Activated CD8-positive, alpha-beta T cell treated with anti-CD3 and anti-CD28 coated beads for 36 hours (primary cell): ENCODE measurements at regions of chr6 and their contacts with region 1.

Region 1: DNA sequence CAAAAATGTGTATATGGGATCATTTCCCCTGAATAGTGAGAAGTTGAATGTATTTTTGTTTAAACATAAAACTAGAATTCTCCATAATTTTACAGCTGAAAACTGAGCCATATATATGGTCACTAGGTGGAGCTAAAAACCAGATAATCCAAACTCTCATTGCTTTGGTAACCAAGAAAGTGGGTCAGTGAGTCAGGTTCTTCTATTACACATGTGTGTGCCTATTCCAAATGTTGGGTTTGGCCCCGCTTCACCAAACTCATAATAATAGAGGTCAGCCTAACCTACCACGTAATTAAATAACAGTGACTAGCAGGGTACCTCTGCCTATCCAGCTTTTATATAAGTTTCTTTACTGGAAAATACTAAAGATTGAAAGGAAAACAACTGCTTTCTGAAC is 19.3 kb upstream of the RNGTT start:
- DNase-seq: peak; percentile 40
- ATAC-seq: peak; percentile 95
- H3K4me3 Mint-ChIP-seq: no peak overlapping the region
- H3K27ac Mint-ChIP-seq: no peak overlapping the region
- H3K4me1 Mint-ChIP-seq: peaks cover 2% of the 10 kb centered on the region
- H3K27me3 Mint-ChIP-seq: no peaks in the 10 kb centered on the region
- CTCF ChIP-seq: peak; percentile 73

Region 2: DNA sequence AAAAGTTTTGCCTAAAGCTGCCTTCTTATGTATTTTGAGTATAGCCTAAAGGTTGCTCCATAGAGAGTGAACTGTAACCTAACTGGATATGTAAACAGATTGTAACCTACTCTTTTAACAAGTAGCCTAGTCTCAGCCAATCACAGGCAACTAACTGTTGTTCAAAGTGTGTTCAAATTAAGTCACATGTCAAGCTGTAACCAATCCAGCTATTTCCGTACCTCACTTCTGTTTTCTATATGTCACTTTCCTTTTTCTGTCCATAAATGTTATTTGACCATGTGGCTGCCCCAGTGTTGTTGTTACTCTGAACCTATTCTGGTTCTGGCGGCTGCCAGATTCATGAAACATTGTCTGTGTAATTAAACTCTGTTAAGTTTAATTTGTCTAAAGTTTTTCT is 28.1 kb after region 1 on chr6:
- CTCF ChIA-PET with region 1: interaction called, 11 read pairs
- POLR2A ChIA-PET with region 1: interaction called, 4 read pairs
- intact Hi-C with region 1: no loop called
- DNase-seq: no peak
- ATAC-seq: no peak
- H3K4me3 Mint-ChIP-seq: no peak overlapping the region
- H3K27ac Mint-ChIP-seq: no peak overlapping the region
- H3K4me1 Mint-ChIP-seq: peaks cover 7% of the 10 kb centered on the region
- H3K27me3 Mint-ChIP-seq: no peaks in the 10 kb centered on the region
- CTCF ChIP-seq: no peak

Region 3: GRCh38 chr6:89080542-89081422 is 98.1 kb after region 1 on chr6 and contains the start of gene PNRC1:
- CTCF ChIA-PET with region 1: interaction called, 27 read pairs
- POLR2A ChIA-PET with region 1: interaction called, 5 read pairs
- intact Hi-C with region 1: loop called (anchors 5 kb)
- DNase-seq: peak; percentile 100
- ATAC-seq: peak; percentile 75
- H3K4me3 Mint-ChIP-seq: peak within 1 kb of the TSS; percentile 96
- H3K27ac Mint-ChIP-seq: peak within 1 kb of the TSS; percentile 99
- H3K4me1 Mint-ChIP-seq: peaks cover 27% of the 10 kb centered on the region
- H3K27me3 Mint-ChIP-seq: no peaks in the 10 kb centered on the region
- CTCF ChIP-seq: no peak
- total RNA-seq, gene PNRC1: 157 to 162 TPM

Region 4: GRCh38 chr6:89139509-89140346 is 157.0 kb after region 1 on chr6:
- CTCF ChIA-PET with region 1: interaction called, 22 read pairs
- POLR2A ChIA-PET with region 1: interaction called, 4 read pairs
- intact Hi-C with region 1: loop called (anchors 10 kb)
- DNase-seq: no peak
- ATAC-seq: no peak
- H3K4me3 Mint-ChIP-seq: no peak overlapping the region
- H3K27ac Mint-ChIP-seq: no peak overlapping the region
- H3K4me1 Mint-ChIP-seq: peaks cover 10% of the 10 kb centered on the region
- H3K27me3 Mint-ChIP-seq: peaks cover 2% of the 10 kb centered on the region
- CTCF ChIP-seq: no peak

Region 5: GRCh38 chr6:89242574-89243330 is 260.0 kb after region 1 on chr6:
- CTCF ChIA-PET with region 1: interaction called, 52 read pairs
- POLR2A ChIA-PET with region 1: no interaction called
- intact Hi-C with region 1: loop called (anchors 2 kb)
- DNase-seq: no peak
- ATAC-seq: peak; percentile 28
- H3K4me3 Mint-ChIP-seq: no peak overlapping the region
- H3K27ac Mint-ChIP-seq: no peak overlapping the region
- H3K4me1 Mint-ChIP-seq: peaks cover 18% of the 10 kb centered on the region
- H3K27me3 Mint-ChIP-seq: no peaks in the 10 kb centered on the region
- CTCF ChIP-seq: peak; percentile 36

Region 6: GRCh38 chr6:89371849-89372505 is 389.3 kb after region 1 on chr6:
- CTCF ChIA-PET with region 1: interaction called, 17 read pairs
- POLR2A ChIA-PET with region 1: no interaction called
- intact Hi-C with region 1: loop called (anchors 10 kb)
- DNase-seq: peak; percentile 85
- ATAC-seq: peak; percentile 87
- H3K4me3 Mint-ChIP-seq: no peak overlapping the region
- H3K27ac Mint-ChIP-seq: peak overlapping the region; percentile 46
- H3K4me1 Mint-ChIP-seq: peaks cover 19% of the 10 kb centered on the region
- H3K27me3 Mint-ChIP-seq: no peaks in the 10 kb centered on the region
- CTCF ChIP-seq: peak; percentile 84